Heart right ventricle (tissue), 16 donors: ENCODE measurements at regions of chr4 and their contacts with region 1.

Region 1: GRCh38 chr4:137393044-137393443 is 139.2 kb downstream of the PCDH18 start:
- DNase-seq: peak in 1 of 2 donors; percentile 36
- ATAC-seq: peak in 7 of 8 donors; percentile 33 to 87 (median 73)
- H3K4me3 ChIP-seq: no peak overlapping the region
- H3K27ac ChIP-seq: peak overlapping the region in 2 of 10 donors; percentile 27 to 43
- H3K4me1 ChIP-seq: peaks cover 0 to 37% (median 0%) of the 10 kb centered on the region in 9 donors
- H3K27me3 ChIP-seq: no peaks in the 10 kb centered on the region
- CTCF ChIP-seq: no peak

Region 2: GRCh38 chr4:137156807-137157206 is 236.2 kb before region 1 on chr4:
- intact Hi-C with region 1: no loop called
- DNase-seq: no peak
- ATAC-seq: no peak
- H3K4me3 ChIP-seq: no peak overlapping the region
- H3K27ac ChIP-seq: no peak overlapping the region
- H3K4me1 ChIP-seq: no peaks in the 10 kb centered on the region
- H3K27me3 ChIP-seq: no peaks in the 10 kb centered on the region
- CTCF ChIP-seq: no peak

Region 3: GRCh38 chr4:137274404-137274803 is 118.6 kb before region 1 on chr4:
- intact Hi-C with region 1: loop called in 1 of 10 experiments (anchors 10 kb)
- DNase-seq: no peak
- ATAC-seq: peak in 2 of 8 donors; percentile 39 to 52
- H3K4me3 ChIP-seq: no peak overlapping the region
- H3K27ac ChIP-seq: no peak overlapping the region
- H3K4me1 ChIP-seq: peaks cover 0 to 17% (median 0%) of the 10 kb centered on the region in 9 donors
- H3K27me3 ChIP-seq: no peaks in the 10 kb centered on the region
- CTCF ChIP-seq: no peak